Activated T-helper 2 cell treated with anti-CD3 and anti-CD28 coated beads, Interferon-gamma antibody, Interleukin-2, Interleukin-4, amounts not matched to agents 10 μg/mL and 5 μg/mL and 100 μg/mL, durations not matched to agents 14 hours and 24 hours and 36 hours (primary cell): ENCODE measurements at regions of chr3 and their contacts with region 1.

Region 1: GRCh38 chr3:150528354-150528797 is 17.9 kb downstream of the SERP1 start:
- DNase-seq: no peak
- H3K4me3 Mint-ChIP-seq: no peak overlapping the region
- H3K27ac Mint-ChIP-seq: no peak overlapping the region
- H3K4me1 Mint-ChIP-seq: peaks cover 6% of the 10 kb centered on the region
- H3K27me3 Mint-ChIP-seq: peaks cover 19% of the 10 kb centered on the region

Region 2: DNA sequence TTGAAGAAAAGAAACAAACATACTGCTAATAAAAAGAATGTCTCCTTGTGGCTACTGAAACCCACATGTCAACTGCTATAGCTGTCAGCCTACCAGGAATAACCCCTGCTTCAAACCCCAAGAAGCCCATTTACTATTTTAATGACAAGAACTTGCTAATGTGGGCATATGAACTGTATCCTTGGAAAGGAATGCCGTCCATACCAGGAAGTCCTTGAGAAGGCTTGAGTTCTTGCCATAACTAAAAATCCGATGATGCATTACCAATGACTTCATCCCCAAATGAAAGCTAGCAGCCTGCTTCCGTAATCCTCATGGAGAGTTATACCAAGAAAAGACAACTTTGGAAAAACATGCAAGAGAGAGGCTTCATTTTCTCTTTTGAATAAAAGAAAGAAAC is 342.0 kb after region 1 on chr3:
- intact Hi-C with region 1: loop called (anchors 1 kb)
- DNase-seq: no peak
- H3K4me3 Mint-ChIP-seq: no peak overlapping the region
- H3K27ac Mint-ChIP-seq: no peak overlapping the region
- H3K4me1 Mint-ChIP-seq: peaks cover 11% of the 10 kb centered on the region
- H3K27me3 Mint-ChIP-seq: peaks cover 3% of the 10 kb centered on the region